PC-9 (cell line): ENCODE measurements at regions of chr2 and their contacts with region 1.

Region 1: DNA sequence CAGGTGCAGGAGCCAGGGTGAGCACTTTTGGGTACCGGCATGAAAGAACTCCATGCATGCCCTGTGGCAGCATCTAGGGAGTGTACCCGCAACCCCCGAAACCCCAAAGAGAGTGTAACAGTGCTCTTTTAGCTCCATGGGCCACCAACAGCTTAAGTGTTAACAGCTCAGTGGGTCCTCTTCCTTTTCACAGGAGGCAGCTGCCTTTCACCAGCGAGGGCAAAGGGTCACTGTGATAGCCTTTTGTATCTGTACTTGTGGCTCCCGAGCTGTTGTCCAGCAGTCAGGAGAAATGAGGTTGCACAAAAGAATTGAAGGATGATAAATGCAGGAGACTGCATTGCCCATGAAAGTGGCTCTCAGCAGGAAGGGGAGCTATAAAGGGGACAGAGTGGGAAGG is 1166.3 kb upstream of the ACVR2A start:
- DNase-seq: no peak
- H3K4me3 ChIP-seq: no peak overlapping the region
- H3K27ac ChIP-seq: no peak overlapping the region
- H3K4me1 ChIP-seq: no peaks in the 10 kb centered on the region
- H3K27me3 ChIP-seq: no peaks in the 10 kb centered on the region
- CTCF ChIP-seq: no peak

Region 2: DNA sequence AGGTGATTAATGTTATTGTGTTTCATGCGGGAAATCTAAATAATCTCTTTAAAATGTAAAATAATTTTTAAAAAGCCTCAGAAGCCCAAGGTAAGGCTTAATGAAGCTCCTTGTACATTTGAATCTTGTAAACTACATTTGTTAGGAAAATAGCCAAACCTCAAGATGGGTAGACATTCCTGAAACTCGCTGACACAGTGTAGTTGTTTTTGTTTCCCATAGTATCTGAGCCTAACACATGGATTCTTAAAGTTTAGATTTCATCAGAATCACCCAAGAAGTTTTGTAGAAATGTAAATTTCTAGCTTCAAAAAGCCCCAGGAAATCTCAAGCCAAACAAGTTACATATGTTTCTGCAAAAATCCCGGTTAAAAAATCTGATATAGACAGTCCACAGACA is 54.7 kb before region 1 on chr2:
- CTCF ChIA-PET with region 1: no interaction called
- POLR2A ChIA-PET with region 1: no interaction called
- intact Hi-C with region 1: no loop called
- DNase-seq: no peak
- H3K4me3 ChIP-seq: no peak overlapping the region
- H3K27ac ChIP-seq: no peak overlapping the region
- H3K4me1 ChIP-seq: no peaks in the 10 kb centered on the region
- H3K27me3 ChIP-seq: no peaks in the 10 kb centered on the region
- CTCF ChIP-seq: no peak

Region 3: DNA sequence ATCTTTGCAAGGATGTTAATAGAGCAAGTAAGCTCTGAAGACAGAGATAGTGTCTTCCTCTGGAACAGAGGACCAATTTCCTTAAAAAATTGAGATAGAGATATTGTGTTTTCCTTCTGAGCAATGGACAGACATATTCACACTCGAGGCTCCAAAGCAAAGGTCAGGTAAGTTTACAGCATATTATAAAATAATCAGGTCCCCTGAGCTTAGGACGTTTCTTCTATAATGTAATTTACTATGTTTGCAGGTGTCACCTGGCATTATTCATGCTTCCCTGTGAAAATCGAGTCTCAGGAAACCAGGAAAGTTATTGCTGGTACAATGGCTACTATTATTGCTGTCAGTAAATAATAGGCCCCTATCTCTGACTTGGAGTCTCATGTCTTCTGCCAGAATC is 30.5 kb after region 1 on chr2:
- CTCF ChIA-PET with region 1: no interaction called
- POLR2A ChIA-PET with region 1: interaction called, 11 read pairs
- intact Hi-C with region 1: no loop called
- DNase-seq: no peak
- H3K4me3 ChIP-seq: no peak overlapping the region
- H3K27ac ChIP-seq: no peak overlapping the region
- H3K4me1 ChIP-seq: no peaks in the 10 kb centered on the region
- H3K27me3 ChIP-seq: no peaks in the 10 kb centered on the region
- CTCF ChIP-seq: no peak

Region 4: GRCh38 chr2:146734042-146734820 is 55.7 kb after region 1 on chr2:
- CTCF ChIA-PET with region 1: no interaction called
- POLR2A ChIA-PET with region 1: no interaction called
- intact Hi-C with region 1: no loop called
- DNase-seq: no peak
- H3K4me3 ChIP-seq: no peak overlapping the region
- H3K27ac ChIP-seq: no peak overlapping the region
- H3K4me1 ChIP-seq: no peaks in the 10 kb centered on the region
- H3K27me3 ChIP-seq: no peaks in the 10 kb centered on the region
- CTCF ChIP-seq: peak; percentile 72